Activated CD4-positive, alpha-beta T cell treated with anti-CD3 and anti-CD28 coated beads, Interleukin-2, amount 10 ng/mL, durations not matched to agents 24 days and 14 days (primary cell): ENCODE measurements at regions of chr1 and their contacts with region 1.

Region 1: DNA sequence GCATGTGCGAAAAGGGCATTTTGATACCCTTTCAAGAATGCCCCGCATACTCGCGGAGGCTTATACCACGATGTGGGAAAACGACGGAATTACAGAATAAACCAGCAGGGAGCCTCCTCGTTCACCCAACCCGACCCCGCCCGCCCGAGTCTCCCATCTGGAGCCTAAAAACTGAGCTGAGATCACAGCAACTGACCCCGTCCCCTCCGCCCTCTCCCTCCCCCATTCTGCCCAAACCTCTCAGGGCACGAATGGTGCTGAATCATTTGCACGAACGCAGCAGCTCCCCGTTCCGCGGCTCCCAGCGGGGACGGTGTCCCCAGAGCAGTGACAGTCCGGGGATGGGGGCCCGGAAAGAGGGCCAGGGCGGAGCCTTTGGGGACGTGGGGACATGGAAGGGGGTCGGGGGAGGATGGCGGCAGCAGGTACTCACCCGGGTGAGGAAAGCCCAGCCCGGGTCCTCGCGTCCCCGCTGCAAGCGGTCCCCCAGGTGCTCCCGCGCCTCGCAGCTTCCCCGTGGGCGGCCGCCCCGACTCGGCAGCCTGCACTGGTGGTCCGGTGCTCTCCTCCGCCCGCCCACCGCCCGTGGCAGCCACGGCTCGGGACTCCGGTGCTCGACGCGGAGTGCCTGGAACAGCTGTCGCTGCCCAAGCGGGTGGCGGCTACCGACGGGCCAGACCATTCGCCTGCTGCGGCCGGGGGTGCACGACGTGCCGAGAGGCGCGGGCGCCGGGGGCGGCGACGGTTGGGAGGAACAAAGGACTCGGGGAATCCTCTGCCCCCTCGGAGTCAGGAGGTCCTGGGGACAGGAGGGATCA is at the start of gene TTLL7:
- DNase-seq: peak; percentile 91
- H3K4me3 Mint-ChIP-seq: peak within 1 kb of the TSS; percentile 85
- H3K27ac Mint-ChIP-seq: peak within 1 kb of the TSS; percentile 57
- H3K4me1 Mint-ChIP-seq: peaks cover 13% of the 10 kb centered on the region
- H3K27me3 Mint-ChIP-seq: peaks cover 63% of the 10 kb centered on the region
- total RNA-seq, gene TTLL7: 0.28 and 0.58 TPM in 2 replicates

Region 2: DNA sequence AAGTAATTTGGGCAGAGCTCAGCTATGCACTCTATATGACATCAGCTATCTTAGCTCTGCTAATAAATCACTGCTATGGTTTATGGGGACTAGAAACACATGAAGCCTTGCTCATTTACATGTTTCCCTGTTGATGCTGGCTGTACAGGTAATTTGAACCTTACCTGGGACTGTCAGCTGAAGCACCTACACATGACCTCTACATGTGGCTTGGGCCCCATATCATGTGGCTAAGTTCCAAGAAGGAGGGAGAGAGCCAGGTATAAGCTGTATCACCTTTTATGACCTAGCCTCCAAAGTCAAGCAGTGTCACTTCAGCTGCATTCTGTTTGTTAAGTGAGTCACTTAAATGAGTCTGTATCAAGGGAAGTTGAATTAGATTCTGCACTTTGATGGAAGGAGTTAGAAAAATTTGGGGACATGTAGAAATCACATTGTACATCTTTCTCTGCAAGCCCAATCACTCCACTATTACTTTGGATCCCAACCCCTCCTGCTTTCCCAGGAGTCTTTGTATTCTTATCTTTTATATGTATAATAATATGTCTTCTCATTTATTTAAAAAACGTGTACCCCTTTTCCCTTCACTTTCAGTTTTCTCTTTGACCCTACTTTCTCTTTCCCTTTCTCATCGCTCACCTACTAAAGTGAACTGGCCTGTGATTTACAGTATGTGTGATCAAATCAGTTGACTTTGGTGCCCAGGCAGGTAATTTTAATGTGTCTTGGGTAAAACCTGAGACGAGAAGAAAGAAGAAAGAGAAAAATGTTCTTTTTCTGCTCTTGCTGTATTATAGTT is 91.9 kb after region 1 on chr1:
- intact Hi-C with region 1: loop called (anchors 5 kb)
- DNase-seq: peak; percentile 65
- H3K4me3 Mint-ChIP-seq: peak overlapping the region; percentile 74
- H3K27ac Mint-ChIP-seq: peak overlapping the region; percentile 66
- H3K4me1 Mint-ChIP-seq: peaks cover 21% of the 10 kb centered on the region
- H3K27me3 Mint-ChIP-seq: no peaks in the 10 kb centered on the region

Region 3: GRCh38 chr1:84462118-84462517 is 463.4 kb after region 1 on chr1:
- intact Hi-C with region 1: no loop called
- DNase-seq: no peak
- H3K4me3 Mint-ChIP-seq: no peak overlapping the region
- H3K27ac Mint-ChIP-seq: no peak overlapping the region
- H3K4me1 Mint-ChIP-seq: no peaks in the 10 kb centered on the region
- H3K27me3 Mint-ChIP-seq: peaks cover 32% of the 10 kb centered on the region